ENCODE measurements at regions of chr12 and their contacts with region 1.

Region 1: DNA sequence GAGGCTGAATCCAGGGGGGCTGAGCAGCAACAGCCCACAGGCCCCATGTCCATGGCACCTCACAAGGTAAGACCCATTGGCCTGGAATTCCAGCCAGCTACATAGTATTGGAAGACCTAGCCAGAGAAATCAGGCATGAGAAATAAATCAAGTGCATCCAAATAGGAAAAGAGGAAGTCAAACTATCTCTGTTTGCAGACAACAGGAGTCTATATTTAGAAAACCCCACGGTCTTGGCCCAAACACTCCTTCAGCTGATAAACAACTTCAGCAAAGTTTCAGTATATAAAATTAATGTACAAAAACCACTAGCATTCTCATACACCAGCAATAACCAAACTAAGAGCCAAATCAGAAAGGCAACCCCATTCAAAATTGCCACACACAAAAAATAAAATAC is 16.9 kb downstream of the PDE6H start:
- DNase-seq: no peak
- H3K4me3 ChIP-seq: no peak overlapping the region
- H3K27ac ChIP-seq: no peak overlapping the region
- H3K4me1 ChIP-seq: peaks cover 0 to 8% (median 0%) of the 10 kb centered on the region in 4 donors
- H3K27me3 ChIP-seq: no peaks in the 10 kb centered on the region
- CTCF ChIP-seq: no peak

Region 2: DNA sequence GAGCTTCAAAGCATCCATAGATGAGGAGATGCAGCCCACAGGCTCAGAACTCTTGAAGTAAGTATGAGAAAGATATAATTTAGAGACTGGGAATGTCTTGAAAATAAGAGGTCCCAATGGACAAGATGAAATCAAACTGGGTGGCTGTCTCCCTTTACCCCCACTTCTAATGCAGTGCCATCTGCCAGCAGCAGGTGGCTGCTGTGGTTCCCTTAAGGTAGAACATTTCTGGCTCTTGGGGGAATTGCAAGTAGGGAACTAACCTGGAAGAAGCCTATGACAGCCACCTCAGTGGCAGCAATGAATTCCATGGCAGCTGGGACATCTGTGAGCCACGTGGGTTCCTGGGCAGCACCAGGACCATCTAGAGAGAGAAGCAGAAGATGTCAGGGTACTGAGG is 52.1 kb before region 1 on chr12:
- intact Hi-C with region 1: loop called (anchors 10 kb)
- DNase-seq: no peak
- H3K4me3 ChIP-seq: no peak overlapping the region
- H3K27ac ChIP-seq: no peak overlapping the region
- H3K4me1 ChIP-seq: no peaks in the 10 kb centered on the region
- H3K27me3 ChIP-seq: no peaks in the 10 kb centered on the region
- CTCF ChIP-seq: no peak

Measured in tibial artery (tissue), 4 donors.